CD4-positive, alpha-beta memory T cell (primary cell): ENCODE measurements at regions of chr12 and their contacts with region 1.

Region 1: DNA sequence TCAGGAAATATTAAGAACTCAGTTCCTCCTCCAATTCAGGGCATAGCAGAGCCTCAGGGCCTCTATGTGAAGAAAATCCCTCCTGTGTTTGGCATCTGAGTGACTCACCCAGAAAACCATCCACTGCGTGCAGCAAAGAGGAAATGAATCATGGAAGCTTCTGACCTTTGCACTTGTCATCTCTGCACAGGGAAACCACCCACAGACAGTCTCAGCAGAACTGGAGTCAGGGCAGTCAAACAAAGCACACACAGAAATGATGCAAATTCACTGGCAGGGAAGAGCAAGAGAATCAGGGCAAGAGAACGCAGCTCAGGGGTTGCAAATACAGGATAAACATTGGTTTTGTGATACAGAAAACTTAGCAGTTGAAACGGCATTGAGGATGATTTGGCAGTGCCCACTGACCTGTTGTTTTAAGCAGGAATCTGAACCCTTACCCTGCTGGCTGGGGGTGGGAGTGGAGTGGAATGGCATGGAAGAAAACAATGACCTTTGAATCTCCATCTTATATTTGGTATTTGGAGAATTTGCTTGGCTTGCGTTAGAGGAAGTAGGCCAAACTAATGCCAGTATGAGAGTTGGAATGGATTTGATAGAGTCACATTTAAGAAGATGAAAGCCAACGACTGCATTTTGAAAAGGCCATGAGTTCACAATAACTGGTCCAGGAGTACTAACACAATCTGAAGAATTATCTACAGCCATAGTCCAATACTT is 53.5 kb downstream of the PHLDA1 start:
- DNase-seq: peak; percentile 69 to 95 (median 79)
- H3K4me3 ChIP-seq: no peak overlapping the region
- H3K4me3 Mint-ChIP-seq: peak overlapping the region; percentile 4 to 75 (median 48)
- H3K27ac ChIP-seq: peak overlapping the region; percentile 79
- H3K27ac Mint-ChIP-seq: peak overlapping the region; percentile 90 to 98 (median 92)
- H3K4me1 ChIP-seq: peaks cover 32% of the 10 kb centered on the region
- H3K4me1 Mint-ChIP-seq: peaks cover 25 to 55% (median 36%) of the 10 kb centered on the region in 4 donors
- H3K27me3 ChIP-seq: no peaks in the 10 kb centered on the region
- H3K27me3 Mint-ChIP-seq: no peaks in the 10 kb centered on the region

Region 2: GRCh38 chr12:75944097-75944904 is 33.8 kb before region 1 on chr12:
- CTCF ChIA-PET with region 1: interaction called, 3 read pairs
- POLR2A ChIA-PET with region 1: interaction called, 4 read pairs
- intact Hi-C with region 1: loop called (anchors 1 kb)
- DNase-seq: peak in 4 of 5 donors; percentile 15 to 41 (median 25)
- H3K4me3 ChIP-seq: no peak overlapping the region
- H3K4me3 Mint-ChIP-seq: peak overlapping the region in 7 of 8 donors; percentile 13 to 78 (median 41)
- H3K27ac ChIP-seq: peak overlapping the region; percentile 22
- H3K27ac Mint-ChIP-seq: peak overlapping the region; percentile 80 to 93 (median 87)
- H3K4me1 ChIP-seq: peaks cover 20% of the 10 kb centered on the region
- H3K4me1 Mint-ChIP-seq: peaks cover 14 to 21% (median 19%) of the 10 kb centered on the region in 4 donors
- H3K27me3 ChIP-seq: no peaks in the 10 kb centered on the region
- H3K27me3 Mint-ChIP-seq: no peaks in the 10 kb centered on the region

Region 3: GRCh38 chr12:75991753-75992152 is 13.6 kb after region 1 on chr12:
- CTCF ChIA-PET with region 1: interaction called, 3 read pairs
- POLR2A ChIA-PET with region 1: interaction called, 4 read pairs
- intact Hi-C with region 1: loop called (anchors 2 kb)
- DNase-seq: no peak
- H3K4me3 ChIP-seq: no peak overlapping the region
- H3K4me3 Mint-ChIP-seq: no peak overlapping the region
- H3K27ac ChIP-seq: no peak overlapping the region
- H3K27ac Mint-ChIP-seq: no peak overlapping the region
- H3K4me1 ChIP-seq: no peaks in the 10 kb centered on the region
- H3K4me1 Mint-ChIP-seq: peaks cover 0 to 7% (median 2%) of the 10 kb centered on the region in 4 donors
- H3K27me3 ChIP-seq: no peaks in the 10 kb centered on the region
- H3K27me3 Mint-ChIP-seq: no peaks in the 10 kb centered on the region

Region 4: DNA sequence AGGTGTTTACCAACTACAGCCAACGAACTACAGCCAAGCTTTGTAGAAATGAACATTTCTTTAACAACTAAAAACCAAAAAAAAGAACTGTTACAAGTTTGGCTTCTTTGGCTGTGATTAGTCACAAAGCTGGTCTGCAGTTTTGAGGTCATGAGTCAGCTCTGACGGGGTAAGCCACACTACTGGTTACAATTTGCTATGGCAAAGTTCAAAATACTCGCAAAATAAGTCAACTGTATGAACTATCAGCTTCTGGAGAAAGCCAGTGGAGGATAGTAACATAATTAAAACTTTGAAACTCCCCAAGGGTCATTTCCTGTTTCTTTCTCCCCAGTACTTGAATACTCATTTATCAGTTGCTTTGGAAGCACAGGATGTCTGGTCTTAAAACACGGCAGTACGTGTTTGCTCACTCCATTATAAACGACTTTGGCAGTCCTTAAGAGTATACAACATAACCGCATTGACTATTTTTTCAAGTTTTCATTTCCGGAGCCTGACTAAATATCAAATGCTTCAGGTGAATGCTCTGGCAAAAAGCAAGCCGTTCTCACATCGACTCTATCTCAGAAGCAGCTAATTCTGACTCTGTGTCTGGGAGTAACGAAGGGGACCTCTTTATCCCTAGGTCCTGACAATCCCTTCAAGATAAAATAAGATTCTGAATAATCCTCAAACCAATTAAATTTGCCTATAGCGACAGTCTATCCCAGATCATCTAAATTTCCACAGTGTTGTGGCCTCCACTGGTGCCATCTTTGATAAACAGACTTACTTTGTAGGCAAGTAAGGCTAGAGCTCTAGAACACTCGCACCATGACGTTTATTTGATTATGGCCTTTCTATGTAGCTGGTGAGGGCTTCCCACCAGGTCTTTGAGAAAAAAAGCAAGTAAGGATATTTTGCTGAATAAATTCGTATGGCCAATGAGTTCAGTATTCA is 42.9 kb after region 1 on chr12:
- CTCF ChIA-PET with region 1: interaction called, 3 read pairs
- POLR2A ChIA-PET with region 1: interaction called, 16 read pairs
- intact Hi-C with region 1: loop called (anchors 1 kb)
- DNase-seq: peak; percentile 79 to 90 (median 82)
- H3K4me3 ChIP-seq: no peak overlapping the region
- H3K4me3 Mint-ChIP-seq: peak overlapping the region; percentile 38 to 81 (median 56)
- H3K27ac ChIP-seq: peak overlapping the region; percentile 77
- H3K27ac Mint-ChIP-seq: peak overlapping the region; percentile 95 to 99 (median 97)
- H3K4me1 ChIP-seq: peaks cover 26% of the 10 kb centered on the region
- H3K4me1 Mint-ChIP-seq: peaks cover 18 to 45% (median 34%) of the 10 kb centered on the region in 4 donors
- H3K27me3 ChIP-seq: no peaks in the 10 kb centered on the region
- H3K27me3 Mint-ChIP-seq: no peaks in the 10 kb centered on the region